Heart left ventricle (tissue), 16 donors: ENCODE measurements at regions of chr7 and their contacts with region 1.

Region 1: GRCh38 chr7:41696314-41696916 is 6.5 kb downstream of the INHBA start:
- DNase-seq: peak; percentile 62 to 85 (median 70)
- ATAC-seq: peak; percentile 43 to 80 (median 75)
- H3K4me3 ChIP-seq: peak overlapping the region in 10 of 12 donors; percentile 18 to 68 (median 44)
- H3K27ac ChIP-seq: peak overlapping the region in 8 of 12 donors; percentile 28 to 82 (median 62)
- H3K4me1 ChIP-seq: peaks cover 0 to 53% (median 19%) of the 10 kb centered on the region in 12 donors
- H3K27me3 ChIP-seq: peaks cover 0 to 8% (median 0%) of the 10 kb centered on the region in 9 donors
- CTCF ChIP-seq: peak; percentile 55 to 81 (median 71)
- POLR2A ChIP-seq: no peak

Region 2: DNA sequence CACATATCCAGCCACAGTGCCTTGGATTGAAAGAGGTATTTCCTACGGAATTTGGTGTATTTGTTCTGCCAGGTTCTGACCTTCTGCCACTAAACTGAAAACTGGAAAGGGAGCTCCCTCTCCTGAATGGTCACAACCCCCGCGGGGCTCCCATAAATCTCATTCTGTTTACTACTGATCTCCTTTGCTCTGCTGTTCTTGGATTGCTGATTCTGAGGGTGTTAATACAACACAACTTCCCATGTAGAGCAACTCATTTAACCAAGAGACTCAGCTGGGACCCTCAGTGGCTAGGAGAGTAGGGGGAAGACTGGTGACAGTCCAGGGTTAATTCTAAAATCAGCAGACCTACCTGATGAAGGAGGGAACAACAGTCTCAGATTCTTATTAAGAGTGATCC is 656.4 kb before region 1 on chr7:
- intact Hi-C with region 1: loop called in 4 of 10 experiments (anchors 5 to 10 kb)
- DNase-seq: no peak
- ATAC-seq: no peak
- H3K4me3 ChIP-seq: no peak overlapping the region
- H3K27ac ChIP-seq: no peak overlapping the region
- H3K4me1 ChIP-seq: no peaks in the 10 kb centered on the region
- H3K27me3 ChIP-seq: no peaks in the 10 kb centered on the region
- CTCF ChIP-seq: no peak
- POLR2A ChIP-seq: no peak

Region 3: GRCh38 chr7:41045556-41046123 is 650.8 kb before region 1 on chr7:
- intact Hi-C with region 1: loop called in 4 of 10 experiments (anchors 5 to 10 kb)
- DNase-seq: no peak
- ATAC-seq: no peak
- H3K4me3 ChIP-seq: no peak overlapping the region
- H3K27ac ChIP-seq: peak overlapping the region in 7 of 12 donors; percentile 33 to 80 (median 65)
- H3K4me1 ChIP-seq: peaks cover 0 to 33% (median 19%) of the 10 kb centered on the region in 12 donors
- H3K27me3 ChIP-seq: no peaks in the 10 kb centered on the region
- CTCF ChIP-seq: peak in 1 of 12 donors; percentile 5
- POLR2A ChIP-seq: no peak

Region 4: GRCh38 chr7:41579961-41580940 is 116.2 kb before region 1 on chr7:
- intact Hi-C with region 1: loop called in 2 of 10 experiments (anchors 10 kb)
- DNase-seq: no peak
- ATAC-seq: peak in 1 of 4 donors; percentile 39
- H3K4me3 ChIP-seq: no peak overlapping the region
- H3K27ac ChIP-seq: no peak overlapping the region
- H3K4me1 ChIP-seq: no peaks in the 10 kb centered on the region
- H3K27me3 ChIP-seq: no peaks in the 10 kb centered on the region
- CTCF ChIP-seq: no peak
- POLR2A ChIP-seq: no peak

Region 5: GRCh38 chr7:41628901-41629300 is 67.5 kb before region 1 on chr7:
- intact Hi-C with region 1: loop called in 1 of 10 experiments (anchors 5 kb)
- DNase-seq: peak in 4 of 5 donors; percentile 18 to 33 (median 24)
- ATAC-seq: peak; percentile 98 to 100 (median 100)
- H3K4me3 ChIP-seq: no peak overlapping the region
- H3K27ac ChIP-seq: peak overlapping the region in 9 of 12 donors; percentile 21 to 83 (median 62)
- H3K4me1 ChIP-seq: peaks cover 0 to 18% (median 2%) of the 10 kb centered on the region in 12 donors
- H3K27me3 ChIP-seq: no peaks in the 10 kb centered on the region
- CTCF ChIP-seq: no peak
- POLR2A ChIP-seq: no peak